ENCODE measurements at regions of chr16 and their contacts with region 1.

Region 1: DNA sequence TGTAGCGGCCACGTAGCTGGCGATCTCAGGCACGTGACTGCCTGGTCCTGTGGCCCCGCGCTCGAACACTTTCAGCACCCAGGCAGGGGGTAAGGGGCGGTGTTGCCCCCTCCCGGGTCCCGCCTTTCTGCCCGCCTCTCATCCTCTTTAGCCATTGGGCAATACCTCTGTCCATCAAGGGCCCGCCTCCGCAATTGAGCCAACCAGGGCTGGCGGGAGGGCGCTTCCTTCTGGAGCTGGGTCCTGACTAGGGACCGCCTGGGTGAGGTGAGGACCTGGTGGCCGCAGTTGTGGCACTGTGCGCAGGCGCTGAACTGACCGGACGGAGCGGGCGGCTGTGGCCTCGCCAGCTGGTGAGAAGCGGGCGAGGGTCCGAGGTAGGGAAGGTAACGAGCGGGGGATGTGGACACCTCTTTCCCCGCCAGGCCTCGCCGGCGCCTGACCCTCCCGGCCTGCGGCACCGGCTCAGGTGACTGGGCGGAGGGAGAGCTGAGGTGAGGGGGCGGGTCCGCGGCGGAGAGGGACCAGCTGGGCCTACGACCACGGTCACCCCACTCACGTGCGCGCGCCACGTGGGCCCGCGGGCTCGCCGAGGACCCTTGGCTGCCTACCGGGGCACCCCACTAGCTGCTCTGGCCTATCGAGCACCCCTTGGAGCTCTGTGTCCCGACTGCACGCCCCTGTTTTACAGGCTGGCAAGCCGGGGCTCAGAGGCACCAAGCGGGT is at the start of gene PDP2:
- H3K4me3 Mint-ChIP-seq: peak within 1 kb of the TSS; percentile 91
- H3K27ac Mint-ChIP-seq: peak within 1 kb of the TSS; percentile 88
- H3K4me1 Mint-ChIP-seq: peaks cover 52% of the 10 kb centered on the region
- H3K27me3 Mint-ChIP-seq: peaks cover 26% of the 10 kb centered on the region

Region 2: DNA sequence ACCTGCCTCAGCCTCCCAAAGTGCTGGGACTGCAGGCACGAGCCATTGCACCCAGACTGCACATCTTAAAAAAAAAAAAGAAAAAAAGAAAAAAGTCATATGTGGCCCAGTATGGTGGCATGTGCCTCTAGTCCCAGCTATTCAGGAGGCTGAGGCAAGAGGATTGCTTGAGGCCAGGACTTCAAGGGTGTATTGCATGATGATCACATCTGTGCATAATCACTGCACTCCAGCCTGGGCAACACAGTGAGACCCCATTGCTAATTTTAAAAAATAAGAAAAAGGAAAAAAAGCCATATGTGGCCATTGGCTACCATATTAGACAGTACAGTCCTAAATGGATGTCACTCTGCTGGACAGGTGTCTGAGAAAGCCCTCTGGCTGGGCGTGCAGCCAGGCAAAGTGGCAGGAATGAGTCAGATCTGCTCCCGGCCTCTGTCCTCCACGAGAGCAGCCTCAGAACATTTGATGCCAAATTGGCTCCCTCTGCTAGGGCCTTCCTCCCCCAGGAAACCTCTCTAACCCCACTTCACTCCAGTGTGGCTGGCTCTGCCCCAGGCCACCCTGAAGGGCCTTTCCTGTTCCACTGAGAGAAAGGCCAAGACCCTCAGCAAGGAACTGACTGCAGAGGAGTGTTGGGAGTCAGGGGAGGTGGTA is 21.6 kb before region 1 on chr16:
- intact Hi-C with region 1: no loop called
- H3K4me3 Mint-ChIP-seq: no peak overlapping the region
- H3K27ac Mint-ChIP-seq: no peak overlapping the region
- H3K4me1 Mint-ChIP-seq: no peaks in the 10 kb centered on the region
- H3K27me3 Mint-ChIP-seq: peaks cover 25% of the 10 kb centered on the region

Region 3: DNA sequence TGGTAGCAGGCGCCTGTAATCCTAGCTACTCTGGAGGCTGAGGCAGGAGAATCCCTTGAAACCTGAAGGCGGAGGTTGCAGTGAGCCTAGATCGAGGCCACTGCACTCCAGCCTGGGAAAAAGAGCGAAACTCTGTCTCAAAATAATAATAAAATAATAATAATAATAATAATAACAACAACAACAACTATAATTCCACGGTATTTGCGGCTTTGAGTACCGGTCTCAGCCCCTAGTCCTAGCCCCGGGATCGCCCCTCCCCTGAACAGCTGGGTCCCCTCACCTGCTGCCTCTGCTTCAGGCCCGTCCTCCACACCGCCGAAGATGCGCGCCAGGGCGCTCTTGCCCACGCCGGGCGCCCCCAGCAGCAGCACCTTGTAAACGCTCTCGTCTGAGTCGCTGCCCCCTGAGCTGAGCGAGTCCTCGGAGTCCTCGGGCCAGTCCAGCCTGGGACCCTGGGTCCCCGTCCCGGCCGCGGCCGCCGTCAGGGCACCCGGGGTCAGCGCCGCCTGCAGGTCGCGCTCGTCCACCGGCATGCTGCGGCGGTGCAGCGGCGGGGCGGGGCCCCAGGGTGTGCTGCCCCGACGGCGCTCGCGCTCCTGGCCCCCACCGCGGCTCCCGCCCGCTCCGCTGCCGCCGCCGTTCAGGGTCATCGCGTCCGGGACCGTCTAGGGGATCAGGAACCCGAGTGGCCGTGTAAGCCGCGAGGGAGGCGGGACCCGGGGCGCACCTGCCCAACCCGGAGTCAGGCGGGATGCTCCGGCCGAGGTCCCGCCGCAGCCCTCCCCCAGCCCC is 44.3 kb after region 1 on chr16:
- intact Hi-C with region 1: loop called (anchors 5 kb)
- H3K4me3 Mint-ChIP-seq: peak overlapping the region; percentile 30
- H3K27ac Mint-ChIP-seq: no peak overlapping the region
- H3K4me1 Mint-ChIP-seq: peaks cover 43% of the 10 kb centered on the region
- H3K27me3 Mint-ChIP-seq: peaks cover 69% of the 10 kb centered on the region

Measured in dendritic cell treated with granulocyte-macrophage colony-stimulating factor and Interleukin-4, amounts not matched to agents 40 ng/mL and 50 ng/mL, for 4 days (primary cell).